ENCODE measurements at regions of chr2 and their contacts with region 1.

Region 1: GRCh38 chr2:236180831-236181453 is 12.8 kb upstream of the GBX2 start:
- DNase-seq: peak; percentile 33
- H3K4me3 ChIP-seq: no peak overlapping the region
- H3K27ac ChIP-seq: no peak overlapping the region
- H3K27me3 ChIP-seq: peaks cover 22% of the 10 kb centered on the region
- CTCF ChIP-seq: peak; percentile 78

Region 2: DNA sequence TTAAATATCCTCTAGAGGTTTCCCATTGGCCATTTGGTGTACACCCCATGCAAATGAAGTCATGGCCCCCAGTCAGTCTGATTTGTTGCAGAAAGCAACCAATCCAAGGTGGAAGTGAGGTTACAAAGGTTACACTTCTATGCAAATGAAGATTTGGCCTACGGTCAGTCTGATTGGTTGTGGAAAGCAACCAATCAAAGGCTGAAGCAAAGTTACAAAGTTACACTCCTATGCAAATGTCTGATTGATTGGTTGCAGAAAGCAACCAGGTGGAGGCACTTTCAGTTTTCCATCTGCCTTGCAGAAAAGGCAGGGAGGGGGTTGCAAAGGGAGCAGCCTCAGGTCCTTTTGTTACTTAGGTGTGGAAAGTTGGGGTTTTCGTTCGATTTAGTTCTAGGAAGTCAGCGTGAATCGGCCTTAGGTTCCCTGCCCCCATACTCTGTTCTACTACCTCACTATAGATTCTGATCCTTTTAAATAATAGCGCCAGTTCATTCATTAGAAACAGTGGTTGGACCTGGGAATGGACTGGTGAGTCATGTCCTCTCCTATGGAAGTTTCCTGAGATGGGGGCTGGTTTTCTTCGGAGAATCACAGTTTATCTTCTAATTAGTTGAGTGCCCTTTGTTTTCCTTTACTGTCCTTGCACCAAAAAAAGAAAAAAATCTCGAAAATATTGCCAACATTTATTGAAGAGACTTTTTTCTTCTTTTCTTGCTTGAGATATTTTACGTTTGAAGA is 407.6 kb before region 1 on chr2:
- CTCF ChIA-PET with region 1: interaction called, 368 read pairs
- POLR2A ChIA-PET with region 1: no interaction called
- DNase-seq: no peak
- H3K4me3 ChIP-seq: no peak overlapping the region
- H3K27ac ChIP-seq: no peak overlapping the region
- H3K27me3 ChIP-seq: no peaks in the 10 kb centered on the region
- CTCF ChIP-seq: no peak

Region 3: GRCh38 chr2:235784789-235785188 is 396.2 kb before region 1 on chr2:
- CTCF ChIA-PET with region 1: interaction called, 368 read pairs
- POLR2A ChIA-PET with region 1: no interaction called
- DNase-seq: no peak
- H3K4me3 ChIP-seq: no peak overlapping the region
- H3K27ac ChIP-seq: no peak overlapping the region
- H3K27me3 ChIP-seq: no peaks in the 10 kb centered on the region
- CTCF ChIP-seq: no peak

Region 4: DNA sequence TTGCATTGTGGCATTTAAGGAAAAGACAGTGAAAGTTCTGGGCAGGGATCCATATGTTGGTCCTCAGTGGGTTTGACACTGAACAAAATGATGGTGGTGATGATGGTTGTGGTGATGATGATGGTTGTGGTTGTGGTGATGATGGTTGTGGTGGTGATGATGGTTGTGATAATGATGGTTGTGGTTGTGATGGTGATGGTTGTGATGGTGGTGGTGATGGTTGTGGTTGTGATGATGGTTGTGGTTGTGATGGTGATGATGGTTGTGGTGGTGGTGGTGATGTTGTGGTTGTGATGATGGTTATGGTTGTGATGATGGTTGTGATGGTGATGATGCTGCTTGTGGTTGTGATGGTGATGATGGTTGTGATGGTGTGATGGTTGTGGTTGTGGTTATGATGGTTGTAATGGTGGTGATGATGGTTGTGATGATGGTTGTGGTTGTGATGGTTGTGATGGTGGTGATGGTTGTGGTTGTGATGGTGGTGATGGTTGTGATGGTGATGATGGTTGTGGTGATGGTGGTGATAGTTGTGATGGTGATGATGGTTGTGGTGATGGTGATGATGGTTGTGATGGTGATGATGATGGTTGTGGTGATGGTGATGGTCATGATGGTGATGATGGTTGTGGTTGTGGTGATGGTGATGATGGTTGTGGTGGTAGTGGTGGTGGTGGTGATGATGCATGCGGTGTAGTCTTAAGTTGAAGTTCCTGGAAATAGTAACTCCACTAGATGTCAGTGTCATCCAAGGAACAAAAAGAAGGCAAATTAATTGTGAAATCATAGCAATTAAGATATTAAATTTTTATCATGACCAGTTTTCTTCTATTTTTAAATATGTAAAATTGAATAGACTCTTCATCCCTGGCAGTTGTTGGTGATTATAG is 378.2 kb before region 1 on chr2:
- CTCF ChIA-PET with region 1: interaction called, 76 read pairs
- POLR2A ChIA-PET with region 1: no interaction called
- DNase-seq: no peak
- H3K4me3 ChIP-seq: no peak overlapping the region
- H3K27ac ChIP-seq: no peak overlapping the region
- H3K27me3 ChIP-seq: no peaks in the 10 kb centered on the region
- CTCF ChIP-seq: peak; percentile 42

Region 5: GRCh38 chr2:236107942-236108625 is 72.9 kb before region 1 on chr2:
- CTCF ChIA-PET with region 1: no interaction called
- POLR2A ChIA-PET with region 1: no interaction called
- DNase-seq: no peak
- H3K4me3 ChIP-seq: no peak overlapping the region
- H3K27ac ChIP-seq: no peak overlapping the region
- H3K27me3 ChIP-seq: no peaks in the 10 kb centered on the region
- CTCF ChIP-seq: no peak

Region 6: GRCh38 chr2:236155406-236155805 is 25.5 kb before region 1 on chr2:
- CTCF ChIA-PET with region 1: no interaction called
- POLR2A ChIA-PET with region 1: no interaction called
- DNase-seq: no peak
- H3K4me3 ChIP-seq: no peak overlapping the region
- H3K27ac ChIP-seq: no peak overlapping the region
- H3K27me3 ChIP-seq: peaks cover 42% of the 10 kb centered on the region
- CTCF ChIP-seq: no peak

Region 7: DNA sequence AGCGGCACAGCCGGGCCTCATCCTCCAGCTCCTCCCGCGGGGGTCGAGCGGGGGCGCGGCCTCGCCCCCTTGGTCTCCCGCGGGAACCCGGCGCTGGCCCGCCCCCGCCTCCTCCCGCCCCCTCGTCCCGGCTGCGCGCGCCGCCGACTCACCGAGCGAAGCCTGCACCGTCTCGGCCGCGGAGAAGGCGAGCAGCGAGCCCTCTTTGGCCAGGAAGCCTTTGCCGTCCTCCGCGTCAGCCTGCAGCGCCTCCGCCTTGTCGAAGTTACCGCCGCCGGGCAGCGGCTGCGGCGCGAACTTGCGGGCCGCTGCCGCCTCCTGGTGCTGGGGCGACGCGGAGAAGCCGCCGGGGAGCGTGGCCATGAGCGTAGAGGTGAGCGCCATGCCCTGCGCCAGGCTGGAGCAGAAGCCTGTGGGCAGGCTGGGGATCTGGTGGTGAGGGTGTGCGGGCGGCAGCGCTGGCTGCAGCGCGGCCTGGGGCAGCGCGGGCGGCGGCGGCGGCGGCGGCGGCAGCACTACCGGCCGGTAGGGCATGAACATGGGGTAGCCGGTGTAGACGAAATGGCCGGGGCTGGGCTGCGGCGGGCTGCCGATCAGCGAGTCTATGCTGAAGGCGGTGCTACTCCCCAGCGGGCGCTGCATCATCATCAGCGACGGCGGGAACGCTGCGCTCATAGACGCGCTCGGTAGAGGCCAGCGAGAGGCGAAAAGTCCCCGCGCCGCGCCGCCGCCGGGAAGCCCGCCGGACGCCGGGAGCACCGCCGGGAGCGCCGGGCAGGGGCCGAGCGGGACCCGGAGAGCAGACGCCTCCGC is 13.4 kb before region 1 on chr2:
- CTCF ChIA-PET with region 1: interaction called, 14 read pairs
- POLR2A ChIA-PET with region 1: no interaction called
- DNase-seq: no peak
- H3K4me3 ChIP-seq: peak overlapping the region; percentile 32; the same call in 1 of the 2 replicates
- H3K27ac ChIP-seq: no peak overlapping the region
- H3K27me3 ChIP-seq: peaks cover 92% of the 10 kb centered on the region
- CTCF ChIP-seq: peak; percentile 15; the same call in 1 of the 2 replicates

Measured in AG04450 (cell line).